WTC11 (cell line): ENCODE measurements at regions of chr4 and their contacts with region 1.

Region 1: GRCh38 chr4:139728840-139729239 is 63.2 kb downstream of the MGST2 start:
- DNase-seq: no peak
- ATAC-seq: no peak
- H3K4me3 Mint-ChIP-seq: no peak overlapping the region
- H3K27ac Mint-ChIP-seq: no peak overlapping the region
- H3K4me1 Mint-ChIP-seq: peaks cover 6% of the 10 kb centered on the region
- H3K27me3 Mint-ChIP-seq: peaks cover 6% of the 10 kb centered on the region
- CTCF ChIP-seq: no peak

Region 2: DNA sequence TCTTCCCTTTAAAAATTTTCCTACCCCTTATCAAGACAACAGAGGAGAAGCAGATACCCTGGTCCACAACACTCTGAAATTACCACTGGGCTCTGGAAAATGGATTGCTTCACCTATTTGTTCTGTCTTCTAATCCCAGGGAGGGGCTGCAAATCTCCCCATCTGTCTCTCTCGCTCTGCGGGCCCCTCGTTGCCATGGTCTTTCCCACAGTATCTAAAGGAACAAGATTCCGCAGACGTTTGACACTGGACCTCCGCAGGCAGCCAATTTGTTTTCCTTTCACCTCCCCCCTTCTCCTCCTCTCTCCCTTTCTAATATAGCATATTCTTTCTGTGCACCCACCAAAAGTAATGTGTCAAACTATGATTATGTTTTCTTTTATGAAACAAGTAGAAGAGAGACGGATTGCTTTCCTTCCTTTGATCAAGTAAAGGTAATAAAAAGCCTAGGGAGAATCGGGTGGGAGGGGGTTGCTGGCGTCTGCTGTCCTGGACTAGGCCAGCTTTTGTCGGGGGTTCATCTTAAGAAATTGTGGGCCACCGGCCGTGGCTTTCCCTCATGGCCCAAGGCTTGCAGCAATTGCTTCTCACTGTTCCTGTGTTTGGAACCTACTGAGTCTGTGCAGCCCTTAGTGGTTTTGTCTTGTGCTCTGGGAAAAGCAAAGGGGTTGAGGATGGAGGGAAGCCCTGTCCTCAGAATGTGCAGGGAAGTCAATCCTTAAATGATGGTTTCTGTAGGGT is 17.8 kb after region 1 on chr4:
- CTCF ChIA-PET with region 1: no interaction called
- POLR2A ChIA-PET with region 1: no interaction called
- DNase-seq: no peak
- ATAC-seq: peak; percentile 59
- H3K4me3 Mint-ChIP-seq: no peak overlapping the region
- H3K27ac Mint-ChIP-seq: peak overlapping the region; percentile 31; the same call in 1 of the 2 replicates
- H3K4me1 Mint-ChIP-seq: peaks cover 26% of the 10 kb centered on the region
- H3K27me3 Mint-ChIP-seq: no peaks in the 10 kb centered on the region
- CTCF ChIP-seq: no peak

Region 3: GRCh38 chr4:139794158-139794954 is 65.5 kb after region 1 on chr4:
- CTCF ChIA-PET with region 1: no interaction called
- POLR2A ChIA-PET with region 1: interaction called, 10 read pairs
- DNase-seq: no peak
- ATAC-seq: no peak
- H3K4me3 Mint-ChIP-seq: no peak overlapping the region
- H3K27ac Mint-ChIP-seq: no peak overlapping the region
- H3K4me1 Mint-ChIP-seq: 0 out of 2 replicates have a peak, but pooled peaks cover 4% of the 10 kb centered on the region
- H3K27me3 Mint-ChIP-seq: 0 out of 2 replicates have a peak, but pooled peaks cover 2% of the 10 kb centered on the region
- CTCF ChIP-seq: no peak